K562 (cell line): ENCODE measurements at regions of chr2 and their contacts with region 1.

Region 1: DNA sequence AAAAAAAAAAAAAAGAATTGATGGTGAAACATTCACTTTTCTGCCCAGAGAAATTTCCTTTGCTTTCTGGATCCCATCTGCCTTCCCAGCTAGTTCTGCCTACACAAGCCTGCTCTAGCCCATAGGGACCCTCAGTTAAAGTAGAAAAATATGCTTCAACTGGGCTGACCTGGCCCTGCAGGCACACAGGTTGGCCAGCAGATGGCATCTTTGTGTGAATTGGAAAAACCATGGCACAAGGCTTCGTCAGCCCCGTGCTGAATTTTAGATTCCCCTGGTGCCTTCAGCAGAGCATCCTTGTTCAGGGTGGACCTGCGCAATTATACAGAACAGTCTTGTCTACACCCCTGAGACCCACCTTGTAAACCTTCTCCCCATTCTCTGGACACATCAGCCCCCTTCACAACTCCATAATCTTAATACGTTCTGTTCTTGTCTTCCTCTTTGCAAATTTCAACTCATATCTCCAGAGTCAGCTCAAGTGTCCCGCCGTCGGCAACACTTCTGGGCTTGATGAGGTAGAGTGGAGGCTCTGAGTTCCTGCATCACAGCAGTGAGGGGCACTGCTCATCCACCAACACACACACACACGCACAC is 114.5 kb downstream of the INSIG2 start:
- DNase-seq: peak; percentile 47 to 57 (median 50)
- ATAC-seq: peak; percentile 94
- H3K4me3 ChIP-seq: no peak overlapping the region
- H3K27ac ChIP-seq: no peak overlapping the region
- H3K4me1 ChIP-seq: no peaks in the 10 kb centered on the region
- H3K27me3 ChIP-seq: peaks cover 0 to 7% of the 10 kb centered on the region in 2 experiments; a peak in 2 of 5 replicates
- CTCF ChIP-seq: peak; percentile 69 to 76 (median 76)
- EP300 ChIP-seq: no peak
- POLR2A ChIP-seq: no peak
- RAD21 ChIP-seq: peak; percentile 27 to 50

Region 2: DNA sequence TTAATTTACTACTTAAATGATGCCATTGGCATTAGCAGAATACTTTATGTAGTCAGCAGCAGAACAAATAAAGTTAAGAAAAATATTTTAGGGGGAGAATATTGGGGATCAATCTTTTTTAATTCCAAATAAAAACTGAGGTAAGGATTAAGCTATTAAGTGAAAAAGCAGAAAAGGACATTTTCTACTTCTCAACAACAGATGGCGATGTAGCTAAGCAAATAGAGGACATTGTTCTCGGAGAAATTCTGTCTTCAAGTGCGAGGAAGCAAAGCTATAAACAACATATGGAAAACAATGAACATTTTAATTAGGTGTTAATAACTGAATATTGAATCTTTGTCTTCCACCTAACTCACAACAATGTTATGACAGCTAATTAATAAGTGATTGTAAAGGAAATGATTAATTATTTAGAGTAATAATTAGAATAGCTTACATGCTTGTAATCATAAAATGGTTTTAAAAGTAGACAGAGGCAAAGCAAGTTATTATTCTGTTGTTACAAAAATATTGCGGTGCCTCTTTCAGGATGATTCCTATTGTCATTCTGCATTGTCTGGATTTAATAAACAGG is 156.1 kb before region 1 on chr2:
- CTCF ChIA-PET with region 1: no interaction called
- POLR2A ChIA-PET with region 1: no interaction called
- in situ Hi-C with region 1: loop called (anchors 10 kb)
- intact Hi-C with region 1: loop called (anchors 5 kb)
- DNase-seq: peak in 3 of 4 experiments; percentile 15 to 33 (median 20)
- ATAC-seq: peak; percentile 61; the same call in 1 of the 3 replicates
- H3K4me3 ChIP-seq: no peak overlapping the region
- H3K27ac ChIP-seq: no peak overlapping the region
- H3K4me1 ChIP-seq: no peaks in the 10 kb centered on the region
- H3K27me3 ChIP-seq: 0 out of 5 replicates have a peak, but pooled peaks cover 0 to 3% of the 10 kb centered on the region in 2 experiments
- CTCF ChIP-seq: peak; percentile 36 to 76 (median 37); a peak in 3 of 6 replicates
- EP300 ChIP-seq: no peak
- POLR2A ChIP-seq: no peak
- RAD21 ChIP-seq: peak; percentile 71 to 85

Region 3: GRCh38 chr2:118056165-118056534 is 146.7 kb before region 1 on chr2:
- CTCF ChIA-PET with region 1: no interaction called
- POLR2A ChIA-PET with region 1: no interaction called
- in situ Hi-C with region 1: loop called (anchors 10 kb)
- intact Hi-C with region 1: no loop called
- DNase-seq: no peak
- ATAC-seq: no peak
- H3K4me3 ChIP-seq: no peak overlapping the region
- H3K27ac ChIP-seq: no peak overlapping the region
- H3K4me1 ChIP-seq: no peaks in the 10 kb centered on the region
- H3K27me3 ChIP-seq: peaks cover 4 to 16% of the 10 kb centered on the region in 2 experiments
- CTCF ChIP-seq: no peak
- EP300 ChIP-seq: no peak
- POLR2A ChIP-seq: no peak
- RAD21 ChIP-seq: no peak